Prostate gland (tissue), 2 donors: ENCODE measurements at regions of chr6 and their contacts with region 1.

Region 1: GRCh38 chr6:89122625-89123024 is 4.8 kb upstream of the SRSF12 start:
- DNase-seq: no peak
- H3K4me3 ChIP-seq: no peak overlapping the region
- H3K27ac ChIP-seq: no peak overlapping the region
- H3K4me1 ChIP-seq: no peaks in the 10 kb centered on the region
- H3K27me3 ChIP-seq: no peaks in the 10 kb centered on the region
- CTCF ChIP-seq: peak in 3 of 4 experiments; percentile 25 to 74 (median 67)
- POLR2A ChIP-seq: no peak

Region 2: GRCh38 chr6:88919032-88919431 is 203.6 kb before region 1 on chr6:
- intact Hi-C with region 1: no loop called
- DNase-seq: no peak
- H3K4me3 ChIP-seq: no peak overlapping the region
- H3K27ac ChIP-seq: no peak overlapping the region
- H3K4me1 ChIP-seq: no peaks in the 10 kb centered on the region
- H3K27me3 ChIP-seq: no peaks in the 10 kb centered on the region
- CTCF ChIP-seq: peak in 1 of 4 experiments; percentile 10
- POLR2A ChIP-seq: no peak

Region 3: GRCh38 chr6:89242574-89243330 is 120.1 kb after region 1 on chr6:
- intact Hi-C with region 1: loop called (anchors 5 kb)
- DNase-seq: peak; percentile 27
- H3K4me3 ChIP-seq: no peak overlapping the region
- H3K27ac ChIP-seq: no peak overlapping the region
- H3K4me1 ChIP-seq: no peaks in the 10 kb centered on the region
- H3K27me3 ChIP-seq: no peaks in the 10 kb centered on the region
- CTCF ChIP-seq: peak in 3 of 4 experiments; percentile 35 to 75 (median 72)
- POLR2A ChIP-seq: no peak